RWPE1 (cell line): ENCODE measurements at regions of chr11 and their contacts with region 1.

Region 1: DNA sequence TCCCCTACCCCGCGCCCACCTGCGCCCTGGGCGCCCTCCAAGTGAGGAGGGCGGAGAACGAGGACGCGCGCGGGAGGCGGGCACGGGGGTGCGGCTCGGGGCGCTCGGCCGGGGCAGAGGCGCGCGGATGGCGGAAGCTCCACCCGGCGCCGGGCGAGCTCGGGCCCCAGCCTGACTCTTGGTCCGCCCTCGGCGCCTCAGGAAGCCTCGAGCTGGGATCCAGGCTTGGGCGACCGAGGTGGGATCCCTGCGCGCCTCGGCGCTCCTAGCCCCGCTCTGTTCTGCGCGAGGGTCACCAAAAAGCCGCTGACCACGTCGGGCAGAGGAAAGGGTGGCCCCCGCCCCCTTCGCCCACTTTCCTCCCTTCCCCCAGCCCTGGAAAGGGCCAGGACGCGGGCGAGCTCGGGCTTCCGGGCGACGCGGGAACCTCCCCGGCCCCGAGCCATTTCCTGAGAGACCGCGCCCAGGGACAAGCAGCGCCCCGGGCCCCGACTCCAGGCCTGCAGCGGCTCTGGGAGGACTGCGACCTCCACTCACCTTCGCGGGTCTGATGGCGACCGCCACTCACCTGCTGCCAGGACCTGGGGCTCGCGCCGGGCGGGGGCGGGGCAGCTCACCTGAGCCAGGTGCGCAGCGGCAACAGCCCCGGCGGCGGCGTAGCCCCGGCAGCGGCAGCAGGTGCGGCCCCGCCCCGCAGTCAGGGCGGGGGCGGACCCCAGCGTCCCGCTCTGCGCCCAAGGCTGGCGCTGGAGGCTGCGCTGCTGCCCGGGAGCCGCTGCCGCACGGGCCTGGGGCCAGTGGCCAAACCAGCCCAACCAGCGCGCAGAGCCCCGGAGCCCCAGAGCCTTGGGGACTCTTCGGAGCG is 2.2 kb upstream of the SIGIRR start:
- DNase-seq: peak; percentile 44
- H3K27ac ChIP-seq: peak overlapping the region; percentile 61
- CTCF ChIP-seq: no peak

Region 2: DNA sequence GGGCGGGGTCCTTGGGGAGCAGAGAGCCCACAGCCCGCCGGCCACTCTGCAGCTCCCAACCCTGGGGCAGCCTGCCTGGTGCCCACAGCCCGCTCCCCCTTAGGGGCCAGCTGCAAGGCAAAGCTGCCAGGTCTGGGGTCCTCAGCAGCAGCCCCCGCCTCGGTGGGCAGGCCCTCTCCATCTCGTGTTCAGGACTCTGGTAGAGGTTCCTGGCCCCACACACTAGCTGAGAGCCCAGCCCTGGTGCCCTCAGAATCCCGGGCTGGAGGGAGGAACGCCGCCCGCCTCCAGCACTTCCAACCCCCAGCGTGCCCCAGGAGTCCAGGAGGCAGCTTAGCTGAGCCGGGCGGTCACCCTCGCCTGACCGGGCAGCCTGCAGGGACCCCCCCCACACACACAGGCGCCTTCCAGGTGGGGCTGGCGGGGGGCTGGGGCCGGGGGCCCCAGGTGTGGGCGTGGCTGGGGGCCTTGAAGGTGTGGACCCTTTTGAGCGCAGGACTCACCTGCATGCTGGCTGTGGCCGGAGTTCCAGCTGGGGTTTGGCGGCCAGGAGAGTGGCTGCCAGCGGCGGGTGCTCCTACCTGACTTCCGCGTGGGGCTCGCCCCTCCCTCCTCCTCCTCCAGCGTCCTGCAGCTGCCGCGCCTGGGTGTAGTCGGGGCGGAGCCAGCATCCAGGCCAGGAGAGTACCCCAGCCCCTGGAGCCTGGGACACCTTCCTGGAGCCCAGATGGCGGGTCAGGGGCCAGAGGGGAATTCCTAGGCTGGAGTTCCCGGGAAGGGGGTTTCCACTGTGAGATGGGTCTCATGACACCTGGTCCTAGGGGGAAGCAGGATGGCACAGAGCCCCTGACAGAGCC is 24.7 kb after region 1 on chr11 and contains the start of gene ANO9:
- CTCF ChIA-PET with region 1: no interaction called
- POLR2A ChIA-PET with region 1: interaction called, 10 read pairs
- DNase-seq: peak; percentile 61
- H3K27ac ChIP-seq: peak within 1 kb of the TSS; percentile 57
- CTCF ChIP-seq: no peak

Region 3: GRCh38 chr11:503179-503981 is 86.4 kb after region 1 on chr11:
- CTCF ChIA-PET with region 1: no interaction called
- POLR2A ChIA-PET with region 1: no interaction called
- DNase-seq: peak; percentile 23
- H3K27ac ChIP-seq: peak overlapping the region; percentile 98
- CTCF ChIP-seq: no peak